ENCODE measurements at regions of chr12 and their contacts with region 1.

Region 1: DNA sequence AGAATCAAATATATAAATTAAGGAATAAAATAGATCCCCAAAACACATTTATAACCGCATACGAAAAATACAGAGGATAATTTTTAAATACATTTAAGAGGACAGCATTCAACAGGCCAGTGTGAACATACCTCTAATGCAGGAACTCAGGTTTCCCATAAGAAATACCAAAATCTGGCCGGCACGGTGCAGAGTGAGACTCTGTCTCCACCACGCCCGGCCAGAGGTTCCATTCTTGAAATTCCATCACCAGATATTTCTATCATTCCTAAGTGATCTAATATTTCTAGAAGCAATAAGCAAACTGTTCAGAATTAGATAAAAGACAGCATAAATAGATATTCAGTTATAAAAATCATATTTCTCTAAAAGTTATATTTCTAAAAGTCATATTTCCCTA is 30.2 kb upstream of the OASL start:
- DNase-seq: no peak
- H3K4me3 ChIP-seq: no peak overlapping the region
- H3K4me3 Mint-ChIP-seq: no peak overlapping the region
- H3K27ac Mint-ChIP-seq: no peak overlapping the region
- H3K4me1 ChIP-seq: peaks cover 10% of the 10 kb centered on the region
- H3K4me1 Mint-ChIP-seq: no peaks in the 10 kb centered on the region
- H3K27me3 ChIP-seq: no peaks in the 10 kb centered on the region
- H3K27me3 Mint-ChIP-seq: no peaks in the 10 kb centered on the region
- CTCF ChIP-seq: no peak

Region 2: DNA sequence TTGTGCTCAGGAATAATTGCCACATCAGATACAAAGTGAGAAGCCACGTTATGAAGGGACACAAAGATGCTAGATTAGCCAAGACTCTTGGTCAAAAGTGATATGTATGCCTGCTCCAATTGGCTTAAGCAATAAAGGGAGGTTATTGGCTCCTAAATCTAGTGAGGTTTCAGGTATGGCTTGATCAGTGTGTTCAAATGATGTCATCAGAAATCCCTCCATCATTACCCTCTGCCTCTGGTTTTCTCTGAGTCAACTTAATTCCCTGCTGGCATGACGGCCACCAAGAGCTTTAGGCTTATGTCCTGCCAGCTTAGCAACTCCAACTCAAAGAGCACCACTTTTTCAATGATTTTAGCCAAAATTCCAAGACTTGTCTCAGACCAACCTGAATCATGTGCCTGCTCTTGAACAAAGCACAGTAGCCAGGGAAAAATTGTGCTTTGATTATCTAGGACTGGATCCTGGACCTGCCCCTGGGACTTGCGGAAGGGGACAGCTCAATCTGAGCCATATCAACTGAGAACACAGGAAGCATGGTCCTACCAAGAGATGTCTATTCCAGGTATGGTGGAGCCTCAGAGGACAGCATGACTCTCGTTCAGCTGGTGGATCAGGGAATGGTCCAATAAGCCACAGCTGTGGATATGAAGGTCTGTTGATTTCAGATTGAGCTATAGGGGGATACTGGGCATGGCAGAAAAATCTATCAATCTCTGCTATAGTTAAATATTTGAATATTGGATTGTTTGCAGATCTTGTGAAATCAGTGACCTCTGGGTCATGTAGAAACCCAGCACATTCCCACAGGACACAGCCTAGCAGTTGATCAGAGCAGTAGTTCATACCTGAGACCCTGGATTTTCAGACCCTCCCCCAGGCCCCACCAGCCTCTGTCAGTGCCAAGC is 47.4 kb after region 1 on chr12:
- CTCF ChIA-PET with region 1: no interaction called
- POLR2A ChIA-PET with region 1: no interaction called
- intact Hi-C with region 1: loop called (anchors 1 kb)
- DNase-seq: peak in 1 of 2 experiments; percentile 47
- H3K4me3 ChIP-seq: no peak overlapping the region
- H3K4me3 Mint-ChIP-seq: no peak overlapping the region
- H3K27ac Mint-ChIP-seq: no peak overlapping the region
- H3K4me1 ChIP-seq: peaks cover 12% of the 10 kb centered on the region; the same call in 1 of the 2 replicates
- H3K4me1 Mint-ChIP-seq: no peaks in the 10 kb centered on the region
- H3K27me3 ChIP-seq: no peaks in the 10 kb centered on the region
- H3K27me3 Mint-ChIP-seq: no peaks in the 10 kb centered on the region
- CTCF ChIP-seq: no peak

Measured in Caco-2 (cell line).